ENCODE measurements at regions of chr1 and their contacts with region 1.

Region 1: DNA sequence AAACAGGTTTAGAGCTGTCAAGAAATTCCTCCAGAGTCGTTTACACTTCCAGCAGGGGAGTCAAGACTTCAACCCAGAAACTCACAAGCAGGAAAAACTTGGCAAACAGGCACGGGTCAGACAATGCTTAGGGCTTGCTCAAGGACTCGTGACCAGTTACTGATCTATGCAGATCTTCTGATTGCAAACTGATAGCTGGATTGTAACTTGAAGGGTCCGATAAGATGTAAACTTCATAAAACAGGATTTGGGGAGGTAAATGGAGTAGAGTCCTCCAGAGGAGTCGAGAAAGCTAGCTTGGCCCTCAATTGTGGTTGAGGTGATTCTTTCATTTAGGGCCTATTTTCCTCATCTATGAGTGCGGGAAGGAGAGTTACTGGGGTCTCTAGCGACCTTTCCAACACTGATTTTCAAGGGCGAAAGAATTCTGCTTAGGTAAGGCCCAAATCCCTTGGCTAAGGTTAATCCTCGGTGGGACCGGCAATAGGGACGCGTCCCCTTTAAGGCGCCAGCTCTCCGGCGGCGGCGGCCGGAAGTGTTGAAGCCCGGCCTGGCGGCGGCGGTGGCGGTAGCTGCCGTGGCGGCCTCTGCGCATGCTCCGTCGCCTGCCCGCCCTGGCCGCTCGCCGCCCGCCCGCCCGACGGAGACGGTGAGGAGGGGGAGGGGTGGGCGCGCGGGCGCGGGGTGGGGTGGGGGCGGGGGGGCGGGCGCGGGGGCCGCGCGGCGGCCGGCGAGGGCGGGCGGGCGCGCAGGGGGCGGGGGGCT is at the start of gene GMEB1:
- DNase-seq: peak; percentile 73 to 98 (median 82)

Region 2: GRCh38 chr1:28648474-28649198 is 19.7 kb before region 1 on chr1 and contains the start of gene RNU11:
- intact Hi-C with region 1: loop called (anchors 1 kb)
- DNase-seq: peak; percentile 71 to 97 (median 79)

Region 3: DNA sequence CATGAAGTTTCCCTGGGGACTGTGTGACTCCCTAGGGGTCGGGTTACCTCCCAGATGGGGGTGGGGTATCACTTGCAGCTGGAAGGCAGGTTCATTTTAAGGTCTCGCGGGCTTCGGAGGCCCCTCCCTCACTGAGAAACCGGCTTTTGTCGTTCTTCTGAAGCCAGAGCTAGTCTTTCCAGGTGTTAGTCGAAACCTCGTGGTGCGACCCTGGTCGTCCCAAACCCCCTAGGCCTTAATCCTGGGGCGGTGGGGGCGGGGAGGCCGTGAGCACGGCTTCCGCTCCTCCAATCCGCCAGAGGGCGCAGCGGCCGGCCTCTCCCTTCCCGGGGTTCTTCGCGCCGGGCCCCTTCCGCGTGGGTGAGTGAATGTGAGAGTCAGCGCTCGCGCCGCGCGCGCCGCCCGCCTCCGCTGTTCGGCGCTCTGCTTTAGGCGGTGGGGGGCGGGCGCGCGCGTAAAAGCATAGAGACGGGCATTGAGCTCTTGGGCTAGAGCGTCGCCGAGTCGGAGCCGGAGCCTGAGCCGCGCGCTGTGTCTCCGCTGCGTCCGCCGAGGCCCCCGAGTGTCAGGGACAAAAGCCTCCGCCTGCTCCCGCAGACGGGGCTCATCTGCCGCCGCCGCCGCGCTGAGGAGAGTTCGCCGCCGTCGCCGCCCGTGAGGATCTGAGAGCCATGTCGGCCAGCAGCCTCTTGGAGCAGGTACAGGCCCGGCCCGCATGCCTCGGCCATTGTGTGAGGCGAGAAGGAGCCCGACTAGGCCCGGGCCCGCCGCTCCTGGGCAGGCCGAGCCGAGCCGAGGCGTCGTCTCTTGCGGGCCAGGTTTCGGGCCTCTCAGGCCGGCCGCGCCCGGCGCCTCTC is 68.3 kb after region 1 on chr1 and contains the start of gene YTHDF2:
- intact Hi-C with region 1: loop called (anchors 1 kb)
- DNase-seq: peak; percentile 92 to 99 (median 95)